ENCODE measurements at regions of chr12 and their contacts with region 1.

Region 1: GRCh38 chr12:79420146-79420618 is 270.6 kb downstream of the PAWR start:
- DNase-seq: peak; percentile 64
- ATAC-seq: peak; percentile 62
- H3K4me3 ChIP-seq: no peak overlapping the region
- H3K27ac ChIP-seq: peak overlapping the region; percentile 60
- H3K4me1 ChIP-seq: peaks cover 45% of the 10 kb centered on the region
- H3K27me3 ChIP-seq: no peaks in the 10 kb centered on the region
- CTCF ChIP-seq: peak; percentile 70

Region 2: GRCh38 chr12:79547735-79548609 is 127.8 kb after region 1 on chr12:
- CTCF ChIA-PET with region 1: no interaction called
- POLR2A ChIA-PET with region 1: no interaction called
- in situ Hi-C with region 1: no loop called
- intact Hi-C with region 1: loop called (anchors 5 kb)
- DNase-seq: peak; percentile 80
- ATAC-seq: peak; percentile 66
- H3K4me3 ChIP-seq: no peak overlapping the region; a peak in 1 of 4 replicates
- H3K27ac ChIP-seq: peak overlapping the region; percentile 88
- H3K4me1 ChIP-seq: peaks cover 37% of the 10 kb centered on the region
- H3K27me3 ChIP-seq: no peaks in the 10 kb centered on the region
- CTCF ChIP-seq: peak; percentile 88

Region 3: DNA sequence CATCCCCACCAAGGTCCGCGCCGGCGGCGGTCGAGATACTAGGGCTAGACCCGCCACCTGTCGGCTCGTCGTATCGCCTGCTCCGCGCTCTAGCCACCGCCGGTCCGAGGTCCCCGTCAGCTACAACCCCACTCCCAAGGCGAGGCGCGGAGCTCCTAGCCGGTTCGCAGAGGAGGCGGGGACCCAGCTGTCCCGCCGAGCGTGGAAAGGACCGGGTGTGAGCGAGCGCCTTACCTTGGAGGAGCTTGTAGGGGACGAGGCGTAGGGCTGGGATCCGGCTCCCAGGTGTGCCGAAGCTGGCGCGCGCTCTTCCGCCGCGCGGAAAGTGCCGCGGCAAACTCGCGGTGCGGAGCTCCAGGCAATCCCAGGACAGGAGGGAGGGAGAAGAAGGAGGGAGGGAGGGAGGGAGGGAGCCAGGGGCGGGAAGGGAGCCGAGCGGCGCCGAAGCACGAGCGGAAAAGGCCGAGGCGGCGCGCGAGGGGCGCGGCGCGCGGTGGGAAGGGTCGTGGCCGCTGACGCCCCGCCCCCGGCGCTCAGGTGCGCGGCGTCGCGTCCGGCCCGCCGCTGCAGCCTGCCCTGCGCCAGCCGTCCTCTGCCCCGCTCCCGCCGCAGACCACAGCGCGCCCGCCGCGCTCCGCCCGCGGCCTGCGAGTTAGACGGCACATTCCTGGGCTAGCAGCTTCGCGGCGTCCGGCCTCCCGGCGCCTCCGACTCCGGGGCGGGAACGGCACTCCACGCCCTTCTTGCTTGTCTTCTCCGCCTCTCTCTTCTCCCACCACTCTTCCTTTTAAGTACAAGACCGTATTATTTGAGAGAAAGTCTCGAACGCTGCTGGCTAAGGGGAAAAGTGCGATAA is 270.7 kb after region 1 on chr12 and contains the start of gene PAWR:
- CTCF ChIA-PET with region 1: no interaction called
- POLR2A ChIA-PET with region 1: interaction called, 3 read pairs
- in situ Hi-C with region 1: no loop called
- intact Hi-C with region 1: loop called (anchors 2 kb)
- DNase-seq: peak; percentile 69
- ATAC-seq: peak; percentile 86
- H3K4me3 ChIP-seq: peak within 1 kb of the TSS; percentile 73 to 91
- H3K27ac ChIP-seq: peak within 1 kb of the TSS; percentile 98
- H3K4me1 ChIP-seq: peaks cover 27% of the 10 kb centered on the region
- H3K27me3 ChIP-seq: no peaks in the 10 kb centered on the region
- CTCF ChIP-seq: peak; percentile 54
- total RNA-seq, gene PAWR: 142 TPM

Region 4: GRCh38 chr12:79737875-79738718 is 317.9 kb after region 1 on chr12:
- CTCF ChIA-PET with region 1: interaction called, 3 read pairs
- POLR2A ChIA-PET with region 1: no interaction called
- in situ Hi-C with region 1: no loop called
- intact Hi-C with region 1: loop called (anchors 5 kb)
- DNase-seq: peak; percentile 27
- ATAC-seq: peak; percentile 90
- H3K4me3 ChIP-seq: no peak overlapping the region
- H3K27ac ChIP-seq: peak overlapping the region; percentile 25; the same call in 1 of the 2 replicates
- H3K4me1 ChIP-seq: no peaks in the 10 kb centered on the region
- H3K27me3 ChIP-seq: no peaks in the 10 kb centered on the region
- CTCF ChIP-seq: peak; percentile 73; the same call in 1 of the 2 replicates

Region 5: DNA sequence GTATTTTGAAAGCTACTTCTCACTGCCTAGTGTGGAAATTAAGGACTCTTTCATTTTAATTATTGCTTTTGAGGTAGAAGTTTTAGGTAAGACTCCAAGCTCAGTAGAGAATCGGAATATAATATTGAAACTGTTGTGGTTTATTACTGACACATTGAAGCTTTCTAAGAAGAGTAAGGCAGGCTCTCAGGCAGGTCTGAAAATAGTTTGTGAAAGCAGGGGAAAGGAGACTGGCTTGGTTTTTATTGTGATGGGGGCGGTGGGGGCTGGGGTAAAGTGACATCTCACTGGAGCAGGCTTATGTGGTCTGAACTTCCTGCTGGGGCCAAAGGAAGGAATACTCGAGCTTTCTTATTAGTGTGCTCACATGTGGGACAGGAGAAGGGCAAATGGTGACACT is 758.7 kb after region 1 on chr12:
- CTCF ChIA-PET with region 1: no interaction called
- POLR2A ChIA-PET with region 1: no interaction called
- in situ Hi-C with region 1: no loop called
- intact Hi-C with region 1: no loop called
- DNase-seq: no peak
- ATAC-seq: no peak
- H3K4me3 ChIP-seq: no peak overlapping the region
- H3K27ac ChIP-seq: no peak overlapping the region
- H3K4me1 ChIP-seq: no peaks in the 10 kb centered on the region
- H3K27me3 ChIP-seq: no peaks in the 10 kb centered on the region
- CTCF ChIP-seq: no peak